ENCODE measurements at regions of chr7 and their contacts with region 1.

Region 1: GRCh38 chr7:18320971-18321567 is 174.5 kb upstream of the HDAC9 start:
- DNase-seq: peak; percentile 33
- CTCF ChIP-seq: peak; percentile 26

Region 2: DNA sequence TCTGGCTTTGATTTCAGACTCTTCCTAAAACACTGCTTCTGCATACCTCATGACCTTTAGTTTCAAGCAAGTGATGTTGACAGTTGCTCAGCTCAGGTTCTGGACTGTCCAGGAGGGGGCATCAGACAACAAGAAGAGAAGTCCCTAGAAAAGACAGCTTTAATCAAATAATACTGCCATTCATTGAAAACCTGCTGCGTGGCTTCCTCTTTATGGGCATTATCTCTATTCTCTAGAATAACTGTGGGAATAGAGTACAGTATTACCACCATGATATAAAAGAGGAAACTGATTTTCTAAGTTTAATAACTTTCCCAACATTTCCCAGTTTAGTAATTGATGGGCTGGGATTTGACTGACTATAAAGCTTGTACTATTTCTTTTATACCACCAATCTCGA is 551.2 kb before region 1 on chr7:
- in situ Hi-C with region 1: loop called (anchors 10 kb)
- DNase-seq: peak; percentile 46
- CTCF ChIP-seq: peak; percentile 73

Region 3: DNA sequence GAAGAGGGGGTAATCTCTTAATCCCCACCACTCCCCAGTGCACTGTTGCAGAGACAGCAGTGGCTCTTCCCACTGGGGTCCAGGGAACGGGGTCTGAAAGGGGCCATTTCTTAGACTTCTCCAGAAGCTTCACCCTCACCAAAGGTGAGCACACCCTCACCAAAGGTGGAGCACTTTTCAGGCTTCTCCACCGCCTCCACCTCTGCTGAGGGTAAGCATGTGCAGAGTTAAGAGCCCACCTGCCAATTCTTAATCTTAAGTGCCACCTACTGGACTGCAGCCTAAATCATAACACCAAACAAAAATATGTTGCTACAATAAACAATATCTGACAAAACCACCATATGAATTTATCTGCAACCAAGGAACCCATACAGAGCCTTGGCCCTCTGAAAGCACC is 407.8 kb before region 1 on chr7:
- in situ Hi-C with region 1: no loop called
- DNase-seq: no peak
- CTCF ChIP-seq: no peak

Region 4: GRCh38 chr7:18086165-18087030 is 234.7 kb before region 1 on chr7:
- in situ Hi-C with region 1: loop called (anchors 25 kb)
- DNase-seq: peak; percentile 39
- CTCF ChIP-seq: no peak

Region 5: GRCh38 chr7:18663321-18663720 is 342.3 kb after region 1 on chr7:
- in situ Hi-C with region 1: no loop called
- DNase-seq: no peak
- CTCF ChIP-seq: no peak